Left cardiac atrium (tissue), 4 donors: ENCODE measurements at regions of chr12 and their contacts with region 1.

Region 1: DNA sequence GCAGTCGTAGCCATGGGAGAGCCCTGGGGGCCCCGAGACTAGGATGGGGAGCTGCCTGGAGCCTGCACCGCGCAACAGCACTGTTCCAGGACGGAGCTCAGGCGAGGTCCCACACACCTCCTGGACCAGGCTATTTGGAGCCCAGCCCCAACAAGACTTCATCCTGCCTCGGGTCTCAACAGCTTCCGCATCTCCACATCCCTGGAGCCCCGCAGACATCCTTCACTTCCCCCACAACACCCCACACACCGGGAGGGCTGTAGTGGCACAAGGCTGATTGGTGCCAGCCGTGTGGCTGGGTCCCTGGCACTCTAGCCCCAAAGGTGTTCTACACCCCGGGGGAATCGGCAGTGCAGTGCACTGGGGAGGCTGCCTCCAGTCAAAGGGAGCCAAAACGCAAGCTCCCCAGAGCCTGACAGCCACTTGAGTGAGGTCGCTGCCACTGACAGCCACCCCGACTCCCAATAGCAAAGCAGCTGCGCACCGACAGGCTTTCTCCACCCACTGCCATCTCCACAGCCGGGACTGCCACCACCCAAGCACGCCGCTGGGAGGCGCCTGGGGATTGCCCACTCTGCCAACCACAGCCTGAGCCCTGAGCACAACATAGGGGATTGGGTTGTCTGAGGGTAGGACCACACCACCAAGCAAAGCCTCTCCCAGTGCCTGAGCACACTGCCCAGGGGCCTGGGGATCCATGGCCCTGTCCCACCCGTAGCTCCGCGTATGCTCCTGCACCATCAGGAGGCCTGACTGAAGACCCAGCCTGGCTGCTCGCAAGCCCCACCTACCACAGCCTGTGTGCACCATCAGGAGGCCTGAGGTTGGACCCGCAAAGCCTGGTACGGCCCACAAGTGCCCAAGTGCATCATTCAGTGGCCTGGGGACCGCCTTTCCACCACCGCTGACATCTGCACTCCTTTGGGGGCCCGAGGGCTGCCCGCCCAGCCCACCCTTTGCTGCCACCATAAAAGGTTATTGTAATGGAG is 13.2 kb upstream of the KLRF1 start:
- DNase-seq: peak; percentile 79
- ATAC-seq: peak; percentile 94 to 98

Region 2: DNA sequence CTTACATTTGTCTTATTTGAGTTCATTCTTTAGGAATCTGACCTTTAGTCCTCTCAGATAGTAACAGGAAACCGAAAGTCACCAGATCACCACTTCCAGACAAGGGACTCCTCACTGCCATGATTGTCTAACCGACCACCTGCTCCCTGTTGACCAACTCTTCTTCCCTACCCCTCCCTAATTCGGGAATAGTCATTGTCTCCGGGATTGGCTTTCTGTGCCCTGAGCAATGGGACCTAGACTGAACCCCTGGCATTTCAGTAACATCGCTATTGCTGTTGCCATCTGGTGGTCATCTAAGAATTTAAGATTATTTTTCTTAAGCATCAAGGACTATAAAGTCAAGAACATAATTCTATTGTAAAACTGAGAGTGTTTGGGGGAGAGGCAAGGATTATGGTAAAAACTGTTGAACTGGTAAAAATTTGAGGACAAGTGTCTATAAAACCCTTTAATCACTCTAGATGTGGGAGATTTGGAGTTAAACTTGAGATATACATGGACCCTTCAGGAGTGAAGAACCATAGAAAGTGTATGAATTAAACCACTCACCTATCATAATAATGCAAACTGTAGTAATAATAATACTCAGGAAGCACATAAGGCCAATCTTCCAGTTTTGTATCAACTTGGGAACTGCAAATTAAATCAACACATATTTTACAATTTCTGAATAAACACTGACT is 111.7 kb after region 1 on chr12:
- intact Hi-C with region 1: loop called (anchors 2 to 10 kb)
- DNase-seq: no peak
- ATAC-seq: peak; percentile 38 to 58

Region 3: DNA sequence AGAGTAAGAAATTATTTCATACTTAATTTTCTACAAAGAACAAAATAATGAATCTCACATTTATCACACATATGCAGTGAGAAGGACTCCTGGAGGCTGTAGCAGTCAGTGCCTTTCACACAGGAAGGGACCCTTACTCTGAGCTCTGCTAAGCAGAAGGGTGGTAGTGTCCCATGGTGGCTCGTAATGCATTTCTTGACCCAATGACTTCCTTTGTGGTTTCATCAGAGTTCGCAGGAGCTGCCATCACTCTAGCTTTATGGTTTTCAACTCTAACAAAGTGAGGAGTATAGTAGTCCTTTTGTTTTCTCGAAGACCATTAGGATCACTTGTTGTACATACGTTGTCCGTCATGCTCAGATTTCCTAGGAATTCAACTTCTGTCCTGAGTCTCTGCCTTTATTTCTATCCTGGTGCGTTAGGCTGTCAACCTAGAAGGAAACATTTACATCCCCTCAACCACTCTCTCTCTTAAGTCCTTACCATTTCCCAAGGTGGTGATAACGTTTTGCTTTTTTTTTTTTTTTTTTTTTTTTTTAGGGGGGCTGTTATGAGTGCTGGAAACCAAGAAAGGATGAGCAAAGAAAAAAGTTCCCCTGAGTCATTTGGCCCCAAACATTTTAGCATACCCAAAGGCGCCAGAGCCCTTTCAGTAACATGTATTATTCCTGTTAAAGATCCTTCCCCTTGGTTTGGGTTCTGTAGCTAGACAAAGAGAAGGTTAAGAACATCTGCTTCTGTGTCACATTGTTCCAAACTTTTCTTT is 435.8 kb after region 1 on chr12:
- intact Hi-C with region 1: no loop called
- DNase-seq: no peak
- ATAC-seq: no peak